CD14-positive monocyte (primary cell): ENCODE measurements at regions of chr3 and their contacts with region 1.

Region 1: DNA sequence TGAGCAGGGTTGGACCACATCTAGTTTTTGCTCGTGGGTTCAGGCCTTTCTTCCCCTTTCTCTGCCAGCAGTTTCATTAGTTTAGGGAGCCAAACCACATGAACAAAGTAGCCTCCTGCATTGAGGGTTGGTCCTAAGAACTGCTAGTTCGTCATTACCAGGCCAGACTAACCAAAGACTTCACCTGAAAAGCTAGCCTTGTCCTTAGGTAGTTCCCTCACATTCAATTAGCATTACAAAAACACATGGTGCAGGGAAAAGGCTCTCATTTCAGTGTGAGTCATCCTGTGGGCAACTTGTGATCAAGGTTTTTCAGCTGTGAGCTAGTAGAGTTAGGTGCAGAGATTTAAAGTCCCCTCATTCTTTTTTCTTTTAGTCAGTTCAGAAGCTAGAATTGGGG is 279.3 kb upstream of the CTNNB1 start:
- DNase-seq: peak; percentile 11 to 34 (median 20)
- H3K4me3 ChIP-seq: no peak overlapping the region
- H3K4me3 Mint-ChIP-seq: no peak overlapping the region
- H3K27ac ChIP-seq: no peak overlapping the region
- H3K27ac Mint-ChIP-seq: peak overlapping the region in 1 of 7 donors; percentile 13
- H3K4me1 ChIP-seq: no peaks in the 10 kb centered on the region
- H3K4me1 Mint-ChIP-seq: peaks cover 8% of the 10 kb centered on the region
- H3K27me3 ChIP-seq: no peaks in the 10 kb centered on the region
- H3K27me3 Mint-ChIP-seq: no peaks in the 10 kb centered on the region
- CTCF ChIP-seq: no peak

Region 2: GRCh38 chr3:40731445-40731844 is 188.6 kb before region 1 on chr3:
- intact Hi-C with region 1: no loop called
- DNase-seq: no peak
- H3K4me3 ChIP-seq: no peak overlapping the region
- H3K4me3 Mint-ChIP-seq: no peak overlapping the region
- H3K27ac ChIP-seq: no peak overlapping the region
- H3K27ac Mint-ChIP-seq: no peak overlapping the region
- H3K4me1 ChIP-seq: no peaks in the 10 kb centered on the region
- H3K4me1 Mint-ChIP-seq: no peaks in the 10 kb centered on the region
- H3K27me3 ChIP-seq: no peaks in the 10 kb centered on the region
- H3K27me3 Mint-ChIP-seq: peaks cover 0 to 3% (median 2%) of the 10 kb centered on the region in 3 donors
- CTCF ChIP-seq: no peak

Region 3: DNA sequence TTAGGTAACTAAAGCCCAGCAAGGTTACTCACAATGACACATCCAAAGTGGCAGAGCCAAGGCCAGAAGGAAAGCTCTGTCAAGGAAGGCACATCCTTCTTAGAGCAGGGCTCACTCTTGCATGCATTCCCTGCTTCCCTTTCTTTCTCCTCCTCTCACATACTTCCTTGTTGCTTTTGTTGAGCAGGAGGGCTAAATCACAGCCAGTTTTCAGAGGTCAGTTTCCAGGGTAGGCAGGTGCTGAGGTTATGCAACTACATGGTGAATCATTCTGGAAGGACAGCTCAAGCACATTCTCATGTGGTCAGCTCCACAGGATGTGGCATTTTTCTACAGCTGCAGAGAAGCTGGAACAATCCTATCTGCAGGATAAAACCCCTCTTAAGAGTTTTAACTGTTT is 119.7 kb before region 1 on chr3:
- intact Hi-C with region 1: loop called in 1 of 2 experiments (anchors 2 kb)
- DNase-seq: peak; percentile 63 to 83 (median 64)
- H3K4me3 ChIP-seq: no peak overlapping the region
- H3K4me3 Mint-ChIP-seq: peak overlapping the region in 1 of 2 donors; percentile 3
- H3K27ac ChIP-seq: peak overlapping the region in 1 of 2 donors; percentile 29
- H3K27ac Mint-ChIP-seq: peak overlapping the region; percentile 5 to 86 (median 57)
- H3K4me1 ChIP-seq: peaks cover 30 to 38% of the 10 kb centered on the region in 2 donors
- H3K4me1 Mint-ChIP-seq: peaks cover 36% of the 10 kb centered on the region
- H3K27me3 ChIP-seq: no peaks in the 10 kb centered on the region
- H3K27me3 Mint-ChIP-seq: peaks cover 3 to 5% (median 3%) of the 10 kb centered on the region in 3 donors
- CTCF ChIP-seq: no peak

Region 4: DNA sequence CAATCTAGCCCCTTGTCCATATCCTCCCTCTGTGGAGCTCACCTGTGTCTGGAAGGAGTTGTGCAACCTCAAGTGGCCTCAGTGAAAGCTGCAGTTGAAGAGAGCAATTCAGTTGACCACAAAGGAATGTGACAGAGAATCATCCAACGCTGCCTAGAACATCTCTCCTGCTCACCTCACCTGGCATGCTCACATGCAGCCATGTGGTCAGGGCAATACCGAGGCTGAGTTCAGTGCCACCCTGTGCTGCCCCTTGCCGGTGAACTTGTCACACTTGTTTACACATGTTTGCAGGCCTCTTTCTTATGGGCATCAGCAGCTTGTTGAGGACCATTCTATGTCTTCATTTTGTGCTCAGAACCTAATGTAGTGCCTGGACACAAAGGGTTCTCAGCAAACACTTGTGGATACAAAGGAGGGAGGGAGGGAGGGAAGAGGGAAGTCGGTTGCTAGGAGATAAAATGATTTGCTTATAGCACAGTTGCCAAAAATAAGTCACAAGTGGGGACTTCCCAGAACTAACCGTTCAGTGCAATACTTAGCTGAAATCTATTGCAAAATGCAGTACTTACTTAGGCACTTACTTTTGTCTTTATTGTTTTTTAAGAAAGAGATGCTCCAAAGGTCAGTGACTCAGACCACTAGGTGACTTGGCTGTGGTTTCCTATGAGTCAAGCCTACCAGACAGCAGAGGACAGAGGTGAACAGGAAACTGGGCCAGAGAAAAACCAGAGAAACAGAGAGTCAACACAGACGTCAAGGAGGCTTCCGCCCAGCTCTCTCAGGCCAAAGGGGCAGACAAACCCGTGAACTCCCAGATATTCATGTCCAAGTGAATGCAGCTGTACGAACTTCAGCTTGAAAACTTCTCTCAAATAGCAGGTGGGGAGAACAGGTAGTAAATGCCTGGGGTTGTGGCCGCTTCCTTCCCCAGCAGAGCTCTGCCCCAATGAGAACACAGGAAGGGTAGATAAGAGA is 51.4 kb after region 1 on chr3:
- intact Hi-C with region 1: loop called in 1 of 2 experiments (anchors 5 kb)
- DNase-seq: peak; percentile 96 to 99 (median 99)
- H3K4me3 ChIP-seq: no peak overlapping the region
- H3K4me3 Mint-ChIP-seq: peak overlapping the region; percentile 63 to 81
- H3K27ac ChIP-seq: peak overlapping the region; percentile 87 to 94
- H3K27ac Mint-ChIP-seq: peak overlapping the region; percentile 96 to 100 (median 99)
- H3K4me1 ChIP-seq: peaks cover 18 to 27% of the 10 kb centered on the region in 2 donors
- H3K4me1 Mint-ChIP-seq: peaks cover 35% of the 10 kb centered on the region
- H3K27me3 ChIP-seq: no peaks in the 10 kb centered on the region
- H3K27me3 Mint-ChIP-seq: peaks cover 0 to 8% (median 3%) of the 10 kb centered on the region in 3 donors
- CTCF ChIP-seq: no peak